ENCODE measurements at regions of chr22 and their contacts with region 1.

Region 1: DNA sequence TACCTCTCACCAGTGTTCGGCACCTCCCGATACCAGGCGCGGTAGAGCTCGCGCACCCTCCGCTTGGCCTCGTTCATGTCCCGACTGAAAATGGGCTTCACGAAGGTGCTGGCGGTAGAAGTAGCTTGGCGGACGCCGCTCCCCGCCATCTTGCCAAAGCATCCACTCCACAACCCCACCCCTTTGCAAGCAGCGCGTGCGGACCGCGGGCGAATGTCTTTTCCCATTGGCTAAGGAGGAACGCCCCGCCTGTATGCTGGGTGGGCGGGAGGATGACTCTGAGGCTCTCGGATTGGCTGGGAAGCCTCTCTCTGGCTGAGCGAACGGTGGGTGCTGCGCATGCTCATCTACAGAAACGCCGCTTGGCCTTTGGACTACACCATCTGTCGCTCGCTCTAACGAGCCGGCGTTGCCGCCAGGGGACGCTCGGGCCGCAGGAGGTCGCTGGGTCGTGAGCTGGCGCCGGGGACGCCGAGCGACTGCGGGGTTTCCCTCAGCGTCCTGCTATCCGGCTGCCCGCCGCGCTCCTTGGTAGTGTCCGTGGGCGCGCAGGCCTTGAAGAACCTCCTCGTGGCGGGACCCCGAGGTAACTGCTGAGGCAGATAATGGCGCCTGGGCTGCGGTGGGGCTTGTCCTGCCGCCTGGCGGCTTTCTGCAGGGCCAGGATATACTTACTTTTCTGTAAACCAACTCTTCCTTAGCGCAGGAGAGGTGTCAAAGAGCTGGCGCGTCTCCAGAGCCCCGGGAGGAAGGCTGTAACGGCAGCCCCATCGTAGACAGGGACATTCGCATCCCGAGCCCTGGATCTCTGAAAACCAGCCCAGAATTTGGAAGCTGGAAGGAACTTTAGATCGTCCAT is at the start of gene NDUFA6:
- DNase-seq: peak; percentile 99
- H3K4me3 Mint-ChIP-seq: peak within 1 kb of the TSS; percentile 96
- H3K27ac Mint-ChIP-seq: peak within 1 kb of the TSS; percentile 99
- H3K4me1 Mint-ChIP-seq: peaks cover 10% of the 10 kb centered on the region
- H3K27me3 Mint-ChIP-seq: no peaks in the 10 kb centered on the region
- CTCF ChIP-seq: peak; percentile 83
- total RNA-seq, gene NDUFA6: 74.9 and 80.4 TPM in 2 replicates

Region 2: DNA sequence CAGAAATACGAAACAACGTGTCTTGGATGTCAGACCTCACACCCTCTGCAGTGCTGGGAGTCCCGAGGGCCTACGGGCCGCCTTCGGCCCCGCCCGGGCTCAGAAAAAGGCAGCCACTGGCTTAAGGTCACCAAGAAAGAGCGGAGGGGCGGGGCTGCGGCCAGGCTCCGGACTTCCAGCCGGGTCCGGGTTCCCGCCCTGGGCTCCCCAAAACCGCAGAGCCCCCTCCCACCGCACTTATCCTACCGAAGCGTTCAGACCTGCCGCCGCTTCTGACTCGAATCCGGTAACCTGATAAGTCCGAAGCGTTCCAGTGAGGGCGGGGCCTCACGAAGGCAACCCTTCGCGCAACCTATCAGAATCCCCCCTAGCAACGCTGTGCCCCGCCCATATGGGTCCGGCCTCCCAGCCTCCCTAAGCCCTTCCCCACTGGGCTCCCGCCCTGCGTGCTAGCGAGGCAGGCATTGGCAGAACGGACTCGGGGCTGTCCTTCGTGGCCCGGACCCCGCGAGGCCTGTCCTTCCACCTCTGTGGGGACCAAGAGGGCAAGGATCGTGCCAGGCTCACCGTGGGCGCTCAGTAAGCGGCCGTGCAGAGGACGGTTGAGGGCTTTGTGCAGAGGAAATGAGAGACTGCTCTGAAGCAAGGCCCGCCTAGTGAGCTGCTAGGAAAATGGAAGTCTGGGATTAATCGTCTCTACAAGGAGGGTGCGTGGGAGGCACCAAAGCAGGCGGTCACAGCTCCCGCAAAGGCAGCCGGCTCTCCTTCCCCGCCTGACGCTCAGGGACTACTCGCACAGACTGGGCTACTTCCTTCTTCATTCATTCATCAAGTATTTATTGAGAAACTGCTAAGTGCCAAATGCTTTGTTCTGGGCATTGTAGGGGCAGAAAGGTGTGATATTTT is 20.1 kb before region 1 on chr22 and contains the start of gene NAGA:
- CTCF ChIA-PET with region 1: interaction called, 7 read pairs
- POLR2A ChIA-PET with region 1: interaction called, 12 read pairs
- intact Hi-C with region 1: no loop called
- DNase-seq: peak; percentile 98
- H3K4me3 Mint-ChIP-seq: peak within 1 kb of the TSS; percentile 82
- H3K27ac Mint-ChIP-seq: peak within 1 kb of the TSS; percentile 89
- H3K4me1 Mint-ChIP-seq: no peaks in the 10 kb centered on the region
- H3K27me3 Mint-ChIP-seq: no peaks in the 10 kb centered on the region
- CTCF ChIP-seq: no peak
- total RNA-seq, gene NAGA: 8.0 and 9.1 TPM in 2 replicates

Region 3: DNA sequence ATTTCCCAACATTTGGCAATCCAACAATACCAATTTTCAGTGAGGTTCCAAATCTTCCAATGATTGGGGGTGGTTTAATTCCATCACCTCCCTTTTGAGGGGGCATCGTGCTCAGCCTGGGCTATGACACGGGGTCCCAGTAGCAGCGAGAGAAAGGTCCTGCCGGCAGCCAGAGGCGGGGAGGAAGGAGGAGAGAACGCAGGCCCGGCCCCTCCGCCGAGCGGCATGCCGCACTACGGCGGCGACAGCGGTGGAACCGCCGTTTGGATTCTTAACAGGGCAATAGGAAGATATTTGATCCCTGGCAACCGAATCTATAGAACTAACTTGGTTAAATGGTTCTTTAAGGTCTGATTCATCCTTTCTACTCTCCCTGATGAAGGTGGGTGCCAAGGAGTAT is 18.0 kb after region 1 on chr22:
- CTCF ChIA-PET with region 1: interaction called, 15 read pairs
- POLR2A ChIA-PET with region 1: interaction called, 3 read pairs
- intact Hi-C with region 1: no loop called
- DNase-seq: no peak
- H3K4me3 Mint-ChIP-seq: no peak overlapping the region
- H3K27ac Mint-ChIP-seq: no peak overlapping the region
- H3K4me1 Mint-ChIP-seq: no peaks in the 10 kb centered on the region
- H3K27me3 Mint-ChIP-seq: no peaks in the 10 kb centered on the region
- CTCF ChIP-seq: no peak

Region 4: DNA sequence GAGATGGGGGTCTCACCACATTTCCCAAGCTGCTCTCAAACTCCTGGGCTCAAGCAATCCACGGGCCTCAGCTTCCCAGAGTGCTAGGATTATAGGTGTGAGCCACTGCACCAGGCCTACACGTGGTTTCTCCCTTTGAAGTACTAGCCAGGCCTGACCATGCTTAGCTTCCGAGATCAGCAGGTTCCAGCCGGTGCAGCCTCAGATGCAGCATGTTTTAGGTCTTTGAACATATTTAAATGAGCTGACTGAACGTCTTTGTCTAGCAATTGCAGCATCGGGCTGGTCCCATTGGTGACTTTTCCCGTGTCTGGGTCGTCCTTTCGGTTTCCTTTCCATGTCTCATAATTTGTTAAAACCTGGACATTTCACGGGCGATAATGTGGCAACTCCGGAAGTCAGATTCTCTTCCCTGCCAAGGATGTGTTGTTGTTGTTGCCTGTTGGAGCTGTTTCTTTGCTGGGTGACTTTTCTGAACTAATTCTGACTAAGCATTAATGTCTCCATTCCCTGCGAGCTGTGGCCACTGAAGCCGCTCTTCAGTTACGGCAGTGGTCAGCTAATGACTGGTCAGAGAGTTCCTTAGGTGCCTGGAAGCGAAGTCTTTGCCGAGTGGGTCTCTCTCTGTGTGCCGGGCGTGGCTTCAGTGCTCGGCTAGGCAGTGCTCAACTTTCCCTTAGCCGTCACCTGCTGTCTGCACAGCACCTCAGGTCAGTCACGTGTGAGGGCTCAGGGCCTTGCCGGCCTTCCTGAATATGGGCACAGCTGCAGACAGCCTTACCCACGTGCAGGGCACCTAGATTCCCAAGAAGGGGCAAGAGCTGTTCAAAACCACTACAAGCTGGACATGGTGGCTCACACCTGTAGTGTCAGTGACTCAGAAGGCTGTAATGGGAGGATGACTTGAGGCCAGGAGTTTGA is 43.5 kb after region 1 on chr22:
- CTCF ChIA-PET with region 1: no interaction called
- POLR2A ChIA-PET with region 1: no interaction called
- intact Hi-C with region 1: no loop called
- DNase-seq: no peak
- H3K4me3 Mint-ChIP-seq: no peak overlapping the region
- H3K27ac Mint-ChIP-seq: no peak overlapping the region
- H3K4me1 Mint-ChIP-seq: no peaks in the 10 kb centered on the region
- H3K27me3 Mint-ChIP-seq: no peaks in the 10 kb centered on the region
- CTCF ChIP-seq: no peak

Region 5: GRCh38 chr22:42162728-42163489 is 72.1 kb after region 1 on chr22:
- CTCF ChIA-PET with region 1: interaction called, 11 read pairs
- POLR2A ChIA-PET with region 1: interaction called, 7 read pairs
- intact Hi-C with region 1: no loop called
- DNase-seq: peak; percentile 75
- H3K4me3 Mint-ChIP-seq: no peak overlapping the region
- H3K27ac Mint-ChIP-seq: peak overlapping the region; percentile 31
- H3K4me1 Mint-ChIP-seq: peaks cover 5% of the 10 kb centered on the region
- H3K27me3 Mint-ChIP-seq: no peaks in the 10 kb centered on the region
- CTCF ChIP-seq: no peak

Region 6: DNA sequence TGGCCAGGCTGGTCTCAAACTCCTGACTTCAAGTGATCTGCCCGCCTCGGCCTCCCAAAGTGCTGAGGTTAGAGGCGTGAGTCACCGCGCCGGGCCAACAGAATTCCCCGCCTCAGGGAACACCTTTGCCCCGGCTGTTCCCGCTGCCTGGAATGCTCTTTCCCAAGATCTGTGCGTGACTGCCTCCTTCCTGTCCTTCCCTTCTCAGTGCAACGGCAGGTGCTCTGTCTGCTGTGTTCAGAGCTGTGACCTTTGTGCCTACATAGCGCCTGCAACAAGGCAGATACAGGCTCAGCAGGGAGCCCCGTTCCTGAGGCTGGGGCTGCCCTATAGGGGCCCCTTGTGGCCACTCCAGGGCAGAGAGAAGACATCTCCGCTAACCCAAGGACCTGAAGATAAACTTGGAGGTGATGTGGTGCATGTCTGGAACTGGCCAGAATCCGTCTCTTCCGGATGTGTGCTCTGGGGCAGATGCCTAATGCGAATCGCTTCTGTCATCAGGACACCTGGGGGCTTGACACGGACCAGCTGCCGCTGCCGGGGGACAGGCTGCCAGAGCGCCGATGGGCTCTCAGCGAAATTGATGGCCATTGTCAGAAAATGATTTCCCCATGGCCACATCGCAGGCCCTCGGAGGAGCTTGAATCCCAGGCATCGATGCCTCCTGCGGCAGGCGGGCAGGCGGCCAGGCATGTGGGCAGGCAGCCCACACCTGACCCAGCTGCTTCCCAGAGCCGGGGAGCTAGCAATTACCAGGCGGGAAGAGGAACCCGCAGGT is 223.2 kb after region 1 on chr22:
- CTCF ChIA-PET with region 1: no interaction called
- POLR2A ChIA-PET with region 1: interaction called, 5 read pairs
- intact Hi-C with region 1: loop called (anchors 2 kb)
- DNase-seq: peak; percentile 97
- H3K4me3 Mint-ChIP-seq: peak overlapping the region; percentile 43
- H3K27ac Mint-ChIP-seq: peak overlapping the region; percentile 55
- H3K4me1 Mint-ChIP-seq: peaks cover 44% of the 10 kb centered on the region
- H3K27me3 Mint-ChIP-seq: no peaks in the 10 kb centered on the region
- CTCF ChIP-seq: peak; percentile 40

Region 7: DNA sequence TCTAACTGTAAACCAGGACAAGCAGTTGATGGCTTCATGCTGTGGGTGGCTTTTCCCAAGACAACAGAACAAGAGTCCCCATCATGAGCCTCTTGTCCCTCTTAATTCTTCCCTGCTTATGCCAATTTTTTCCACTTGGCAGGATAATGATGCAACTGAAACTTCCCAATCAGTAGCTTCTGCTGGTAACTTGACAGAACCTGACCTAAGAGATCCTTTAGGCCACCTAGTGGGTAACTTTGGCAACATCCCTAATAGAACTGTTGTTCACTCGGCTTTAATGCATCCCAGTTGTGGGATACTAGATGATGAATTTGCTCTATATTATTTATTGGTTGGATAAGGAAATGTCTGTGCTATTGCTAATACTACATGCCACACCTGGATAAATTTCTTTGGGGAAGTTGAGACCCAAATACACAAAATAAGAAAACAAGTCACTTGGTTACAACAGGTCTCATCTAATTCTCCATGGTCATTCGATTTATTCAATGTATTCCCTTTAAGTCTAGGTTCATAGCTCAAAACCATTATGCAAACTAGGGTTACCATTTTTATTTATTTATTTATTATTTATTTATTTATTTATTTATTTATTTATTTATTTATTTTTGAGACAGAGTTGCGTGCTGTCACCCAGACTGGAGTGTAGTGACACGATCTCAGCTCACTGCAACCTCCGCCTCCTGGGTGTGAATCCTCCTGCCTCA is 382.8 kb after region 1 on chr22:
- CTCF ChIA-PET with region 1: interaction called, 12 read pairs
- POLR2A ChIA-PET with region 1: no interaction called
- intact Hi-C with region 1: loop called (anchors 1 kb)
- DNase-seq: peak; percentile 74
- H3K4me3 Mint-ChIP-seq: no peak overlapping the region
- H3K27ac Mint-ChIP-seq: no peak overlapping the region
- H3K4me1 Mint-ChIP-seq: no peaks in the 10 kb centered on the region
- H3K27me3 Mint-ChIP-seq: peaks cover 39% of the 10 kb centered on the region
- CTCF ChIP-seq: peak; percentile 46

Region 8: DNA sequence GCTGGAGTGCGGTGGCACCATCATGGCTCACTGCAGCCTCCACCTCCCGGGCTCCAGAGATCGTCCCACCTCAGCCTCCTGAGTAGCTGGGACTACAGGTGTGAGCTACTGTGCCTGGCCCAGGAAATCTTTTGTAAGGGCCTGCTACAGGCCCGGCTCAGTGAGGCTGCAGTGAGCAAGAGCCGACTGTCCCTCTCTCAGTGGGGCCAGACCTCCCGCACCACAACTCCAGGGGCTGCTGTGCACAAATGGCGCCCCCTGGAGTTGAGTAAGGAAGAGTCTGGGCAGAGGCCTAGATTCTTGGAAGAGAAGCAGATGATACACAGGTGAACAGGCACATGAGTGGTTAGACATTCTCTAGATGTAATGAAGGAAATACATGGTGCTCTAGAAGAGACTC is 470.0 kb after region 1 on chr22:
- CTCF ChIA-PET with region 1: no interaction called
- POLR2A ChIA-PET with region 1: no interaction called
- intact Hi-C with region 1: no loop called
- DNase-seq: peak; percentile 31
- H3K4me3 Mint-ChIP-seq: no peak overlapping the region
- H3K27ac Mint-ChIP-seq: no peak overlapping the region
- H3K4me1 Mint-ChIP-seq: no peaks in the 10 kb centered on the region
- H3K27me3 Mint-ChIP-seq: no peaks in the 10 kb centered on the region
- CTCF ChIP-seq: peak; percentile 32

Measured in MCF 10A (cell line).